Activated CD4-positive, alpha-beta memory T cell treated with anti-CD3 and anti-CD28 coated beads for 36 hours (primary cell): ENCODE measurements at regions of chr16 and their contacts with region 1.

Region 1: DNA sequence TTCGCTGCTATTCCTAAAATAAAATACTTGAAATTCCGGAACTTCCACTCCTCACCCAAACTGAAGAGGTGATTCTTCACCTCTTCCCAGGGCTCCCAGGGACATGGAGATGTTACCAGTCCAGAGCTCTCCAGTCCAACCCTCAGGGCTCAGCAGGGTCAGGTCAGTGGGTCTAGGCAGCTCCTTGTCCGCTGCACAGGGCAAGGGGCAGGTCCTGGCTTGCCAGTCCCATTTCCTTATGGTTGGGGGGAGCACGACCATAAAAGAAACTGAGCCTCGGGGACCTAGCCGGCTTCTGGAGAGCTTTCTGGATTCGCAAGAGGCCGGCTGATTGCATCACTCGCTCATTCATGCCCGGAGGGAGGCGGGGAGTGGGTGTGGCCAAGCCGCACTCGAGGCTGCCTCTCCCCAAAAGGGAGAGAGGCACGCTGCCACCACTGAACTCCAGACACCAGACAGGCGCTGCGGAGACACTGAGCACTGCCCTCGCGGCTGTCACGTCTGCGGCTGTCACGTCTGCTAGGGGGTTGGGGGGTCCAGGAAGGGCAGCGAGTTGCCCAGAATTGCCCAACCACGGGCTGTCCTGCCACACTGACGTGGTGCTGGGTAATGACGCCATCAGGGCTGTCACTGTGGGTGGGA is 15.8 kb downstream of the SLC7A5 start:
- DNase-seq: peak; percentile 95
- H3K4me3 Mint-ChIP-seq: peak overlapping the region; percentile 53
- H3K27ac Mint-ChIP-seq: peak overlapping the region; percentile 88
- H3K4me1 Mint-ChIP-seq: peaks cover 60% of the 10 kb centered on the region
- H3K27me3 Mint-ChIP-seq: no peaks in the 10 kb centered on the region

Region 2: DNA sequence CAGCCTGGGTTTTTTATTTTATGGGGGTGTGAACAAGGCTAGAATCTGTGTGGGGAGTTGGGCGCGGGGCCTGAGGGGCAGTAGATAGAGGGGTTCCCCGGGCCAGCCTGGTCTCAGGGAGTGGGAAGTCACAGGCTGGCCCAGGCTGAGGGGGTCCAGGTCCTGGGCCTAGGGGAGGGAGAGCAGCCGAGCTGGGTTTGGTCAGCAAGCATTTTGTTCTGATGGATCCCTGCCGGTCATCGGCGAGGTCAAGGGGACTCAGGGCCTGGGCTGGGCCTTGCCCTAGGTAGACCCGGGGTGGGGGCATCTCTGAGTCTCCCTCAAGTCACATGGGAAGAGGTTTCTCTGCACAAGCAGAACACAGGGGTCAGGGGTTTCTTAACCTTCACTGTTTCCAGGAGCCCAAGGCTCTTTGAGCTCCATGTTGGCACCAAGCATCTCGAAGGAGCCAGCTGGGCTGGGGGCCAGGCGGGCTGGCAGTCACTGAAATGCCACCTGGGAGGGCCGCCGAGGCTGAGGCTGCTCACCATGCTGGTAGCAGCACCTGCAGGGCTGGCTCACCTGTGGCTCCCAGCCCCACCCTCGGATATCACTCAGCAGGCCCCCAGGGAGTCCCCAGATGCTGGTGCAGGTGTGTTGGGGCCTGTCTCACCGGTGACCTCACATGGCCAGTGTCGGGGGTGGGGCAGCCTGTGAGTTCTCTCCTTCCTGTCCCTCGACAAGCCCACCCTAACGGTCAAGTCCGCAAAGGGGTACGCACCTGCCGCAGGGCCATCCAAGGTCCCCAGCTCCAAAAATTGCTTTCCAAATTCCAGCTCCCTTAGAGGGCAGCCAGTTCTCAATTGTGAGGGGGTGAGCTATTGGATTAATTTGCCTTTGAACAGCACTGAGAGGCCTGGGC is 25.2 kb before region 1 on chr16:
- CTCF ChIA-PET with region 1: interaction called, 20 read pairs
- POLR2A ChIA-PET with region 1: no interaction called
- intact Hi-C with region 1: no loop called
- DNase-seq: peak; percentile 42
- H3K4me3 Mint-ChIP-seq: peak overlapping the region; percentile 29
- H3K27ac Mint-ChIP-seq: peak overlapping the region; percentile 60
- H3K4me1 Mint-ChIP-seq: no peaks in the 10 kb centered on the region
- H3K27me3 Mint-ChIP-seq: no peaks in the 10 kb centered on the region

Region 3: DNA sequence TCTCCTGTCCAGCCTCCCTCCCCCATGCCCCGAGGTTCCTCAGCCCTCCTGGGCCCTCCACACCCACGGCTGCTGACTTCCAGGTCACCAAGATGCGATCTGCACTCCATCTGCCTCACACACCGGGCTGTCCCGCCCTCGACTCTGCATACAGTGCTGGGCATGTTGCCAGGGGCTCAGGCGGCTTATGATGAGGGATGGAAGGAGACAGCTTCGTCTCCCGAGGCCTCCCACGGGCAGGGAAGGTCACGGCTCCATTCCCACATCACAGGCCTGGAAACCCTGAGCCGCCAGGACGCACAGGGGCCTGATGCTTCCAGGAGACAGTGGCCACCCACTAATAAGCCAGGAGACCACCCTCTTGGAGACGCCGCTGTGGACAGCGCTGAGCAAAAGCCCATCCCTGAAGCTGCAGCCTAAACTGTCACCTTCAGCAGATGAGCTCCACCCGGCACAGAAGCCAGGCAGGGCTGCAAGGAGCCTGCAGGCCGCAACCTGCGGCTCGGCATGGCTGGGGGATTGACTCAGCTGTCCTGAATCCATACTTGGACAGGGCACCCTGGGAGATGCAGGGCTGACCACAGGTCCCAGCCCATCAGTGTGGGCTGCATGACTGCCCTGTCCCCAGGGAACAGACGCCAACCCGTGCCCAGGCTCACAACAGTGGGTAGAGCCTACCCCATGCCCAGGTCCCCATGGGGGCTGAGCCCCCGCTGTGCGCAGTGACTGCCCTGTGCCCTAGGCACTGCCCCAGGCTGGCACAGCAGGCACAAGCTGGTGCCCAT is 18.7 kb before region 1 on chr16:
- CTCF ChIA-PET with region 1: interaction called, 22 read pairs
- POLR2A ChIA-PET with region 1: no interaction called
- intact Hi-C with region 1: no loop called
- DNase-seq: no peak
- H3K4me3 Mint-ChIP-seq: no peak overlapping the region
- H3K27ac Mint-ChIP-seq: no peak overlapping the region
- H3K4me1 Mint-ChIP-seq: no peaks in the 10 kb centered on the region
- H3K27me3 Mint-ChIP-seq: no peaks in the 10 kb centered on the region